Activated T-helper 1 cell treated with anti-CD3 and anti-CD28 coated beads, Interleukin-12 subunit alpha, Interleukin-12 subunit beta, Interleukin-2, Interleukin-4 antibody, amounts not matched to agents 30 ng/mL and 10 ng/mL and 1 ng/mL, durations not matched to agents 14 hours and 24 hours and 36 hours (primary cell): ENCODE measurements at regions of chr11 and their contacts with region 1.

Region 1: GRCh38 chr11:111601979-111602864 is at the start of gene SIK2:
- DNase-seq: peak; percentile 84
- H3K4me3 Mint-ChIP-seq: peak within 1 kb of the TSS; percentile 97
- H3K27ac Mint-ChIP-seq: peak within 1 kb of the TSS; percentile 93
- H3K4me1 Mint-ChIP-seq: peaks cover 44% of the 10 kb centered on the region
- H3K27me3 Mint-ChIP-seq: no peaks in the 10 kb centered on the region
- total RNA-seq, gene SIK2: 8.4 and 10.0 TPM in 2 replicates

Region 2: GRCh38 chr11:111520565-111520964 is 81.7 kb before region 1 on chr11:
- intact Hi-C with region 1: no loop called
- DNase-seq: no peak
- H3K4me3 Mint-ChIP-seq: no peak overlapping the region
- H3K27ac Mint-ChIP-seq: no peak overlapping the region
- H3K4me1 Mint-ChIP-seq: peaks cover 24% of the 10 kb centered on the region
- H3K27me3 Mint-ChIP-seq: peaks cover 1% of the 10 kb centered on the region

Region 3: GRCh38 chr11:111565114-111565720 is 37.0 kb before region 1 on chr11:
- intact Hi-C with region 1: loop called (anchors 2 kb)
- DNase-seq: peak; percentile 28
- H3K4me3 Mint-ChIP-seq: no peak overlapping the region
- H3K27ac Mint-ChIP-seq: no peak overlapping the region
- H3K4me1 Mint-ChIP-seq: no peaks in the 10 kb centered on the region
- H3K27me3 Mint-ChIP-seq: no peaks in the 10 kb centered on the region

Region 4: GRCh38 chr11:111623527-111624030 is 21.4 kb after region 1 on chr11:
- intact Hi-C with region 1: no loop called
- DNase-seq: no peak
- H3K4me3 Mint-ChIP-seq: no peak overlapping the region
- H3K27ac Mint-ChIP-seq: no peak overlapping the region
- H3K4me1 Mint-ChIP-seq: no peaks in the 10 kb centered on the region
- H3K27me3 Mint-ChIP-seq: no peaks in the 10 kb centered on the region

Region 5: DNA sequence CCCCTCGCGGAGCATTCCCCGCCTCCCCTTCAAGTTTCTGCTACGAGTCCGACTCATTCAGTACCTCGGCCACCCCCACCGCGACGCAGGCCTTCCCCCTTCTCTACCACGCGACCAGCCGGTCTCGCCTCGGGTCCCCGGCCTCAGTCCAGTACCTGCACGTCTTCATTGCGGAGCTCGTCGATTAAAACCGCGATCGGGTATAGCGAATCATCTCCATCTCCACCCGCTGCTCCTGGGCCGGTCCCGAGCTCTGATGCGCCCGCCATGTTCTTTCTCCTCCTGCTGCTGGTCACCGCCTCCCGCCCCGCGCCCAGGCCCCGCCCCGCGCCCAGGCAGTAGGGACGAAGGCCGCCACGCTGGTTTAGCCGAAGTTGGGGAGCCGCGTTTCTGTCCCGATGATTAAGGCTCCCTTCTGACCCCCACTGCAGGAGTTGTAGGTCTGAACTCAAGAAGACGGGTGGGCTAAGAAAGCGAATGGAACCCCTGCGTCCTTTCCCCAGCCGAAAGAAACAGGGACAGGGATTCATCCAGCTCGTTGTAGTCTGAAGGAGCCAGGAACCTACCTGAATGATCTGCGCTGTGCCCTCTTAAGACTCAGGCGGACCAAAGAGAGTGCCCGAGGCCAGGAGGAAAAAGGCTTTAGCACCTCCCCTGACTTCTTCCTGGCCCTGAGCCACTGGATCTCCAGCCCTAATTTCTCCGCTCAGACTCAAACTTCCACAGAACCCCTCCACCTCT is 164.0 kb after region 1 on chr11 and contains the start of gene PPP2R1B:
- intact Hi-C with region 1: loop called (anchors 1 kb)
- DNase-seq: peak; percentile 60
- H3K4me3 Mint-ChIP-seq: peak within 1 kb of the TSS; percentile 96
- H3K27ac Mint-ChIP-seq: peak within 1 kb of the TSS; percentile 97
- H3K4me1 Mint-ChIP-seq: peaks cover 43% of the 10 kb centered on the region
- H3K27me3 Mint-ChIP-seq: no peaks in the 10 kb centered on the region
- total RNA-seq, gene PPP2R1B: 58.1 and 61.4 TPM in 2 replicates

Region 6: DNA sequence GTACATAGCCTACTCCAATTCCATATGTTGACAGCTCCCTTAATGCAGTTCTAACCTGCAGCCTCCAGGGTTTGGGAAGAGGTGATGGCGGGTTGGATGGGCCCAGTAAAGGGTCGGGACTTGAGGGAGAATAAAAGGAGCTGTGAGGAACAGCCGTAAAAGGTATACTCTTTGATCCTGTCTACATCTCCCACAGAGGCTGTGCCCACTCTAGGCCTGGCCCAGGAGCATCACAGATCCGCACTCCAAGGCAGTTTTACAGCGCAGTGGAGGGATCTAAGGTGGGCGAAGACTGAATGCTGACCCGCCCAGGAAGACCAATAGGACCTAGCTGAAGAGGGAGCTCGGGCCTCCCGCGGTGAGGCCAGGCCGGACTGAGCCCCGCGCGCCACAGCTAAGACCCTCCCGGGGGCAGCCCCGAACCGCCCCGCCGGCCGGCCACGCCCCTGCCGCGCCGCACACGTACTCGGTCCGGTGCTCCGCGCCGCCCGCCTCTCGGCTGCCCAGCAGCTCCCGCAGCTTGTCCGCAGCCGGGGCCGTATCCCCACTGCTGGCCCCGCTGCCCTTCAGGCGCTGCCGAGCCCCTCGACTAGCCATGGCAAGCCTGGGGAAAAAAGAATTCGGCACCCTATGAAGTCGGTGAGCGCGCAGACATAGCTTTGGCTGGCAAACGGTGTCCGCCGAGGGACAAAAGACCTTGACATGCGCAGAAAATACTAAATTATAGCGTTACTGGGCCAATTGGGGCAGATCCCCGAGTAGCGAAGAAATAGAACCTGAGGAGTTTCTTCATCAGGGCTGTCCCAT is 268.9 kb after region 1 on chr11 and contains the start of gene ALG9:
- intact Hi-C with region 1: loop called (anchors 2 kb)
- DNase-seq: peak; percentile 85
- H3K4me3 Mint-ChIP-seq: peak within 1 kb of the TSS; percentile 89
- H3K27ac Mint-ChIP-seq: peak within 1 kb of the TSS; percentile 90
- H3K4me1 Mint-ChIP-seq: peaks cover 32% of the 10 kb centered on the region
- H3K27me3 Mint-ChIP-seq: no peaks in the 10 kb centered on the region
- total RNA-seq, gene ALG9: 29.3 and 31.8 TPM in 2 replicates

Region 7: GRCh38 chr11:112086422-112087191 is 484.4 kb after region 1 on chr11 and contains the starts of genes SDHD and TIMM8B:
- intact Hi-C with region 1: loop called (anchors 5 kb)
- DNase-seq: peak; percentile 96
- H3K4me3 Mint-ChIP-seq: peak within 1 kb of the TSS; percentile 99
- H3K27ac Mint-ChIP-seq: peak within 1 kb of the TSS; percentile 96
- H3K4me1 Mint-ChIP-seq: peaks cover 66% of the 10 kb centered on the region
- H3K27me3 Mint-ChIP-seq: no peaks in the 10 kb centered on the region
- total RNA-seq, gene SDHD: 95.4 and 98.0 TPM in 2 replicates
- total RNA-seq, gene TIMM8B: 85.6 and 89.2 TPM in 2 replicates